Activated B cell treated with CpG ODN at 0.5 μM for 24 hours (primary cell): ENCODE measurements at regions of chr3 and their contacts with region 1.

Region 1: GRCh38 chr3:108489771-108490170 is 20.6 kb downstream of the MYH15 start:
- DNase-seq: no peak
- ATAC-seq: peak; percentile 72
- H3K4me3 Mint-ChIP-seq: no peak overlapping the region
- H3K27ac Mint-ChIP-seq: no peak overlapping the region
- H3K4me1 Mint-ChIP-seq: no peaks in the 10 kb centered on the region
- H3K27me3 Mint-ChIP-seq: peaks cover 5% of the 10 kb centered on the region
- CTCF ChIP-seq: peak; percentile 29

Region 2: DNA sequence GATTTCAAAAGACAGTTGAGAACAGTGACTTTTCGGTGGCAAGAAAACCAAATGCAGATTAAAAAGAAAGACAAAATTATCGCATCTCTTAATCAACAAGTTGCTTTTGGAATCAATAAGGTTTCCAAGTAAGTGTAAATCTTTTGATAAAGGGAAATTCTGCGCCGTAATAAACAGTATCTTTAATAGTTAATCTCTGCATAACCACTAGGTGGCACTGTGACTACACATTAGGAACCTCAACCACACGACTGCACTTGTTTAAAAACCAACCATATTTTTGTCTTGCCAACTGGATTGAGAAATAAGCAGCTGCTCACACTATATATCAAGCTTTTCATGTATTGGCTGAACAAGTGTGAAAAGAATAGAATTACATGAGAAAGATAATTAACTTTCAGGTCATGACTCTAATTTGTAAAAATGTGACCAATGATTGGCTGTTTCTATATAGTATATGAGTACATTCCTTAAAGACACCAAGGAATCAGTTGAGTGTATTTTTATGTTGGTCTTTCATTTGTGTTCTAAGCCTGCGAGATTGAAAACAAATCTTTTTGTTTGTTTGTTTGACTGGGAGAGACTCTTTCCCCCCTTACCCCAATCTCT is 172.5 kb after region 1 on chr3:
- CTCF ChIA-PET with region 1: no interaction called
- POLR2A ChIA-PET with region 1: no interaction called
- intact Hi-C with region 1: loop called (anchors 1 kb)
- DNase-seq: no peak
- ATAC-seq: peak; percentile 66
- H3K4me3 Mint-ChIP-seq: no peak overlapping the region
- H3K27ac Mint-ChIP-seq: no peak overlapping the region
- H3K4me1 Mint-ChIP-seq: peaks cover 4% of the 10 kb centered on the region
- H3K27me3 Mint-ChIP-seq: no peaks in the 10 kb centered on the region
- CTCF ChIP-seq: no peak

Region 3: GRCh38 chr3:108914774-108915641 is 425.2 kb after region 1 on chr3:
- CTCF ChIA-PET with region 1: interaction called, 24 read pairs
- POLR2A ChIA-PET with region 1: no interaction called
- intact Hi-C with region 1: loop called (anchors 1 kb)
- DNase-seq: no peak
- ATAC-seq: peak; percentile 78
- H3K4me3 Mint-ChIP-seq: no peak overlapping the region
- H3K27ac Mint-ChIP-seq: no peak overlapping the region
- H3K4me1 Mint-ChIP-seq: no peaks in the 10 kb centered on the region
- H3K27me3 Mint-ChIP-seq: peaks cover 13% of the 10 kb centered on the region
- CTCF ChIP-seq: peak; percentile 32

Region 4: DNA sequence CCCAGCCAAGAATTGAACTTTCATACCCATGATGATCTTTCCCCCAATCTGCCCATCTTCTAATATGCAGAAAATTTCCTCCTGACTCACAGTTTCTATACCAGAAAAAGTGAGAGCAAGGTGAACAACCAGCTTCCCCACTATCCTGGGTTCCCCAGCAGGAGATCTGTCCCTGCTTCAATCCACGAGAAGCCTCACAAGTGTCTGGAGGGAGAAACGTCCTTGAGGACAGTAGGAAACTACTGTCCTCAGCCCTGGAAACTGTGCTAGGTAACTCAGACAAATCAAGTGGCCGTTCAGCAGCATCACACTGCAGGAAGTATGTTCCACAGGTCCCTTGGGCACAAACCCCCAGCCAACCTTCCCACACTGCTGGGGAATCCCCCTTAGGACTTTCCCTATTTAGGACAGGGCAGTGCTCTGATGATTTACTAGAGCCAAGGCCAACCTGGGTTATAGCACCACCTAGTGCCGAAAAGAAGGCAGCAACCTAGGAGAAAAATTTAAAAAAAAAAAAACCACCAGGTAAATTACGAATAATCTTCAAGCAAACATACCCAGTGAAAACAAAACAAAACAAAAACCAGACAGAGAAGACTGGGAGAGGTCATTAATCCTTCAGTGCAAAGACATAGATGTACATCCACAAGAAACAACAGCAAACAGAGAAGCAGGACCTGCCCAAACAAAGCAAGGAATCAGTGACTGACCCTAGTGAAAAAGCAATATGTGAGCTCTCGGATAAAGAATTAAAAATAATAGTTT is 592.2 kb after region 1 on chr3:
- CTCF ChIA-PET with region 1: no interaction called
- POLR2A ChIA-PET with region 1: no interaction called
- intact Hi-C with region 1: loop called (anchors 2 kb)
- DNase-seq: peak; percentile 23
- ATAC-seq: peak; percentile 97
- H3K4me3 Mint-ChIP-seq: no peak overlapping the region
- H3K27ac Mint-ChIP-seq: no peak overlapping the region
- H3K4me1 Mint-ChIP-seq: peaks cover 6% of the 10 kb centered on the region
- H3K27me3 Mint-ChIP-seq: peaks cover 9% of the 10 kb centered on the region
- CTCF ChIP-seq: no peak